OCI-LY7 (cell line): ENCODE measurements at regions of chr12 and their contacts with region 1.

Region 1: DNA sequence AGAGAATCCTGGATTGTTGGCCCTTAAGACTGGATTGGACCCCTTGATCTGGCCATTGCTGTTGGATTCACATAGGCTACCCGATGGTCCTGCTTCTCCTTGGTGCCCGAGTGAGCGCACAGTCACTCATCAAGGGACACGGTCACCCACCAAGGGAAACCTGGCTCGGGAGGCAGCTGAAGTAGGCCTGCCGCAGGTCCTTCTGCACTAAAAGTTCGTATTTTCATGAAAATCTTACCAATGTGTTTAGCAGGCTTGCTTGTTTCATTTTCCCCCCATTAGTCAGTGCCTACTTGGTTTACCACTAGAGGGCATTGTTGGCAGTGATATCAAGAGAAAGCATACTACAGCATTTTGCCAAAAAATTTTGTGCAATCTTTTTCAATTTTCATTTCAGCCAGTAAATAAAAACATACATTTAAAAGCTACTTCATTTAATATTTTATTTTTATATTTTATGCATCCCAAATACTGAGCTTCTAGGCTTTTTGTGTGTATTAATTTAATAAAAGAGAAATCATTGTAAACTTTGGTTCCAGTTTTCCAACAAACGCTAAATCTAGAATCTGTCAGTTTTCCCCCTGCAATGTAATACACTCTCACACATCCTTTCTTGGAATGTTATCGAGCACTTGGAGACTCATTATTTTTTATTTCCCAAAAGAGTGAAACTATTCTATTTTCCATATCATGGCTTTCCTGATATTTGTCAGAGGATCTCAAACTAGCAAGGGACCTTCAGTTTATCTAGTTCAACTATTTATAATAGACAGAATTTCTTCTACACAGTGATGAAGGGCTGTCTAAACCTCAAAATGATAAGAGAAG is 116.7 kb downstream of the LMNTD1 start:
- DNase-seq: peak; percentile 77
- H3K4me3 ChIP-seq: no peak overlapping the region
- H3K27ac ChIP-seq: no peak overlapping the region
- H3K4me1 ChIP-seq: peaks cover 5% of the 10 kb centered on the region
- CTCF ChIP-seq: peak; percentile 98

Region 2: DNA sequence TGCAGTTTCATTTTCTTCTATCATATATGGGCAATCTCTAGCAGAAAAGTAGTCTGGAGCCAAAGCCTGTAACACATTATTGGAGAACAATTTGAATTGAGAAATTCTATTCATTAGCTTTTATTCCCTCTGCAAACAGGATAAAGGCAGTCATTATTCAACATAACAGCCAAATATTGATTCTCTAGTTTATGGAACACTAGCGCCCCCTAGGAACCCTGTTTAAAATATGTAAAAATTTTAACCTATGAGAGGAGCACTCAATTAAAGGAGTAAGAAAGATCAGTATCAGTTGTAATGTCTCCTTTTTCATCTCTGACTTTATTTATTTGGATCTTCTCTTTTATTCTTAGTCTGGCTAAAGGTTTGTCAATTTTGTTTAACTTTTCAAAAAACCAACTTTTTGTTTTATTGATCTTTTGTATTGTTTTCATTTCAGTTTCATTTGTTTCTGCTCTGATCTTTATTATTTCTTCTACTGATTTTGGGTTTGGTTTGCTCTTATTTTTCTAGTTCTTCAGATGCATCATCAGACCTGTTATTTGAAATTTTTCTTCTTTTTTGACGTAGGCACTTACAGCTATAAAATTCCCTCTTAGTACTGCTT is 121.5 kb after region 1 on chr12:
- CTCF ChIA-PET with region 1: no interaction called
- POLR2A ChIA-PET with region 1: no interaction called
- intact Hi-C with region 1: loop called (anchors 5 kb)
- DNase-seq: peak; percentile 61
- H3K4me3 ChIP-seq: no peak overlapping the region
- H3K27ac ChIP-seq: no peak overlapping the region
- H3K4me1 ChIP-seq: no peaks in the 10 kb centered on the region
- CTCF ChIP-seq: peak; percentile 86

Region 3: DNA sequence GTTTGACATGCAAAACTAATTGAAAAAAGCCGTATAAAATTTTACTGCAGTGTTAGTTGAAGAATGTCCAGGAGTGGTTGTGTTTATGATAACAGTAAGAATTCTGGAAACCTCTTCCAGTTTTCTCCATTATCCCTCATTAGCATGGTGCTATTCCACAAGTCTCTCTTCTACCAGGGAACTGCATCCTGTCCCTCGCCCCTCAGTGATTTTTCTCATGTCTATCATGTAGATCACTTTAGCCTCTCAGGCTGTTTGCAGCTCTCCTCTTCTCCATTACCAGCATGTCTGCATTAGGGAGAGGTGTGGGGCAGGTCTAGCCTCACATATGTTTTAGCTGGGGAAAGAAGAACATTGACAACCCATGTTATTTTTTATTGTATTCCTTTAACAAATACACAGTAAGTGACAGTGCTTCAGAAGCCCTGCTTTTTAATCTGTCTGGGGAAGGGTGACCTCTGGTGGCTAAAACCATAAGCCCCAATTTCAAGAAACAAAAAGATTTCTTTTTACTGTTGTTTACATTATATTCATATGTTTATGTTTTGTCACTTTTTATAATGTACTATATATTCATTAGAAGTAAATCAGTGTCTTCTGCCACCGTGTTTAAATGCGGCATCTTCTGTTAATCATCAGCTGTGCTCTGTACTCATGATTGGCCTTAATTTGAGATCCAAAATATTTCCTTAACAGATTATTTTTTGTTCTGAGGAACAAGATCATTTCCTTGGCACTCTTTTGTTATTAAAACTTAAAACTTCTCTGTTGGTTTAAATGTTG is 592.7 kb after region 1 on chr12:
- CTCF ChIA-PET with region 1: no interaction called
- POLR2A ChIA-PET with region 1: no interaction called
- intact Hi-C with region 1: loop called (anchors 2 kb)
- DNase-seq: peak; percentile 45
- H3K4me3 ChIP-seq: no peak overlapping the region
- H3K27ac ChIP-seq: no peak overlapping the region
- H3K4me1 ChIP-seq: no peaks in the 10 kb centered on the region
- CTCF ChIP-seq: peak; percentile 91